ENCODE measurements at regions of chr20 and their contacts with region 1.

Region 1: GRCh38 chr20:2752567-2753460 is 47.6 kb downstream of the CPXM1 start:
- DNase-seq: peak in 2 of 5 donors; percentile 40 to 70
- ATAC-seq: no peak
- H3K4me3 ChIP-seq: peak overlapping the region; percentile 10 to 62 (median 46)
- H3K27ac ChIP-seq: no peak overlapping the region
- H3K4me1 ChIP-seq: peaks cover 0 to 30% (median 20%) of the 10 kb centered on the region in 12 donors
- H3K27me3 ChIP-seq: peaks cover 5 to 54% (median 46%) of the 10 kb centered on the region in 9 donors
- CTCF ChIP-seq: peak; percentile 33 to 72 (median 58)
- POLR2A ChIP-seq: no peak

Region 2: DNA sequence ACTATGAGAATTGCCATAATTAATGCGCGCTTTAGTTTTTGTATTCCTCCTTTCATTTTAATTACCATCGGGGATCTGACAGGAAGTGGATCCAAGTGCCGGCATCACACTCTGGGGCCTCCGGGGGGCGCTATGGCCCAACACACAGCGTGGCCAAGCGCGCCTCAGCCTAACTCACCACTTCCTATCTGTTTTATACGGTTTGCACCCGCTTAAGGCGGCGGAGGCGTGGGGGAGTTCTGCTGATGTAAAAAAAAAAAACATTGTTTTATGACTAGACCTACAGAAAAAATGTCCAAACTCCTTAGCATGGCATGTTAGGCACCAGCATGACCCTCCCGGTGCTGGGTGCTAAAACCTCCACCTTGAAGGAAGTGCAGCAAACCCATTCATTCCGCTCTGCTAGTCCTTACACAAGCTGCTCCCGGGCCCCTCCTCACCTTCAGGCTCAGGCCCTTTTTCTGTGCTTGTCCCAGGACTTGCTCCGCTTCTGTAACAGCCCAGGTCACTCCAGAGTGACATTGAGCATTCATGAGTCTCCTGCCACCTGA is 64.7 kb before region 1 on chr20:
- intact Hi-C with region 1: loop called in 2 of 10 experiments (anchors 5 to 10 kb)
- DNase-seq: peak in 3 of 5 donors; percentile 34 to 69 (median 40)
- ATAC-seq: peak in 3 of 4 donors; percentile 48 to 71 (median 63)
- H3K4me3 ChIP-seq: no peak overlapping the region
- H3K27ac ChIP-seq: no peak overlapping the region
- H3K4me1 ChIP-seq: peaks cover 0 to 13% (median 4%) of the 10 kb centered on the region in 12 donors
- H3K27me3 ChIP-seq: peaks cover 0 to 16% (median 0%) of the 10 kb centered on the region in 9 donors
- CTCF ChIP-seq: peak; percentile 43 to 77 (median 58)
- POLR2A ChIP-seq: no peak

Region 3: GRCh38 chr20:2840138-2840966 is 87.5 kb after region 1 on chr20 and contains the starts of genes PCED1A and VPS16:
- intact Hi-C with region 1: loop called in 5 of 10 experiments (anchors 5 to 10 kb)
- DNase-seq: peak; percentile 89 to 95 (median 91)
- ATAC-seq: peak; percentile 97 to 99 (median 98)
- H3K4me3 ChIP-seq: peak within 1 kb of the TSS; percentile 70 to 99 (median 91)
- H3K27ac ChIP-seq: peak within 1 kb of the TSS; percentile 69 to 96 (median 87)
- H3K4me1 ChIP-seq: peaks cover 0 to 26% (median 15%) of the 10 kb centered on the region in 12 donors
- H3K27me3 ChIP-seq: no peaks in the 10 kb centered on the region
- CTCF ChIP-seq: no peak
- POLR2A ChIP-seq: peak in 1 of 2 donors; percentile 46
- total RNA-seq, gene PCED1A: 5.0 to 20.7 (median 6.8) TPM
- total RNA-seq, gene VPS16: 13.9 to 28.6 (median 19.5) TPM

Region 4: GRCh38 chr20:2851086-2851485 is 98.3 kb after region 1 on chr20:
- intact Hi-C with region 1: loop called in 9 of 10 experiments (anchors 5 to 10 kb)
- DNase-seq: no peak
- ATAC-seq: no peak
- H3K4me3 ChIP-seq: no peak overlapping the region
- H3K27ac ChIP-seq: no peak overlapping the region
- H3K4me1 ChIP-seq: peaks cover 0 to 13% (median 6%) of the 10 kb centered on the region in 12 donors
- H3K27me3 ChIP-seq: no peaks in the 10 kb centered on the region
- CTCF ChIP-seq: no peak
- POLR2A ChIP-seq: no peak

Region 5: GRCh38 chr20:2873010-2873746 is 120.4 kb after region 1 on chr20 and contains the start of gene PTPRA:
- intact Hi-C with region 1: no loop called
- DNase-seq: peak; percentile 94 to 96 (median 95)
- ATAC-seq: peak; percentile 97 to 98 (median 97)
- H3K4me3 ChIP-seq: peak within 1 kb of the TSS; percentile 62 to 100 (median 84)
- H3K27ac ChIP-seq: peak within 1 kb of the TSS; percentile 70 to 92 (median 80)
- H3K4me1 ChIP-seq: peaks cover 0 to 52% (median 31%) of the 10 kb centered on the region in 12 donors
- H3K27me3 ChIP-seq: no peaks in the 10 kb centered on the region
- CTCF ChIP-seq: peak in 1 of 12 donors; percentile 4
- POLR2A ChIP-seq: peak; percentile 15 to 95
- total RNA-seq, gene PTPRA: 17.3 to 43.4 (median 32.2) TPM

Region 6: GRCh38 chr20:2991532-2991931 is 238.7 kb after region 1 on chr20:
- intact Hi-C with region 1: loop called in 3 of 10 experiments (anchors 5 to 10 kb)
- DNase-seq: no peak
- ATAC-seq: no peak
- H3K4me3 ChIP-seq: no peak overlapping the region
- H3K27ac ChIP-seq: no peak overlapping the region
- H3K4me1 ChIP-seq: peaks cover 0 to 17% (median 0%) of the 10 kb centered on the region in 12 donors
- H3K27me3 ChIP-seq: no peaks in the 10 kb centered on the region
- CTCF ChIP-seq: no peak
- POLR2A ChIP-seq: no peak

Measured in heart left ventricle (tissue), 16 donors.